H1 (cell line): ENCODE measurements at regions of chr4 and their contacts with region 1.

Region 1: DNA sequence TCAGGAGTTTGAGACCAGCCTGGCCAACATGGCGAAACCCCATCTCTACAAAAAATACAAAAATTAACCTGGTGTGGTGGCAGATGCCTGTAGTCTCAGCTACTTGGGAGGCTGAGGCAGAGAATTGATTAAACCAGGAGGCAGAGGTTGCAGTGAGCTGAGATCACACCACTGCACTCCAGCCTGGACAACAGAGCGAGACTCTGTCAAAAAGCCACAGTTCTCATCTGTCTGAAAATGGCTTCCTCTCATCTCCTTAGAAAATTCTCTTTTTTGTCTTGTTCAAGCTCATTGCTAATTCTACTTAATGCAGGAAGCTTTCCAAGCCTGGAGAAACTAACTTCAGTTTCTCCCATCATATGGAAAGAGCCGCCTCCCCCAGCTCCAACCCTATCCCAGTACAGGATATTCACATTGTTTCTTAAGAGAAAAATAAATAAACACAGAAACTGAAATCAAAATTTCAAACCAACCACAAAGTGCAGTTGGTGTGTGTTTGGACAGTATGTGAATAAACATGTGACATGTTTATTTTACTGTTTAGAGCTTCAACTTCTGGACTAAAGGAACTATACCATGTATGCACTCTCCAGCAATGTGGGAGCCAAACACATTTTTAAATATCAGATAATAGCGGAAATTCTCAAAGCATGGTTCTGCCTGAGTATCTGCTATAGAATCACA is 55.0 kb upstream of the GAB1 start:
- DNase-seq: no peak
- H3K4me3 ChIP-seq: no peak overlapping the region
- H3K27ac ChIP-seq: no peak overlapping the region
- H3K4me1 ChIP-seq: peaks cover 0 to 4% (median 3%) of the 10 kb centered on the region in 4 experiments; a peak in 3 of 7 replicates
- H3K27me3 ChIP-seq: no peaks in the 10 kb centered on the region
- CTCF ChIP-seq: no peak
- EP300 ChIP-seq: no peak
- POLR2A ChIP-seq: no peak
- RAD21 ChIP-seq: no peak

Region 2: DNA sequence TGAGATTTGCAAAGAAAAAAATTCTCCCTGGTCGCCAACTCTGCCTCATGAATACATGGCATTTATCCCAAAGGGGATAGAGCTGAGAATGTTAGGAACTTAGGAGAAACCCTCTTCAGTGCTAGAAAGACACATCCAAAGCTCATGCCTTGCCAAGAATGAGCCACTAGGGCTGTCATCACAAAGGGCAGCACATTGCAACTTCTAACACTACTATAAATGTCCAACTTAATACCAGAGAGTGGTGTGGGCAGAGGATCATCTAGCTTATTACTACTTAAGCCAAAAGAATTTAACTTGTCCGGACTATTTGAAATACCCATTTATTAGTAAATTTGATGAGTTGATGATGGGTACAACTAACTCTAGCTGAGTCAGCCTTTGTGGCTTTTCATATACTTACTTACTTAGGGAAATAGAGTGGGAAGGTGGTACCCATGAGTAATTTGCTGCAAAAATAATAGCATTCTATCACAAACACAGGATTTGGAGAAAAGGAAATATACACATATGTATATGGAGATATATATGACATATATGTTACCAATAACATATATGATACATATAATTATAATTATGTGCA is 11.3 kb before region 1 on chr4:
- CTCF ChIA-PET with region 1: interaction called, 11 read pairs
- POLR2A ChIA-PET with region 1: interaction called, 3 read pairs
- DNase-seq: no peak
- H3K4me3 ChIP-seq: no peak overlapping the region
- H3K27ac ChIP-seq: no peak overlapping the region
- H3K4me1 ChIP-seq: no peaks in the 10 kb centered on the region
- H3K27me3 ChIP-seq: no peaks in the 10 kb centered on the region
- CTCF ChIP-seq: no peak
- EP300 ChIP-seq: no peak
- POLR2A ChIP-seq: no peak
- RAD21 ChIP-seq: no peak

Region 3: GRCh38 chr4:143358923-143359643 is 77.4 kb after region 1 on chr4:
- CTCF ChIA-PET with region 1: no interaction called
- POLR2A ChIA-PET with region 1: no interaction called
- DNase-seq: no peak
- H3K4me3 ChIP-seq: no peak overlapping the region
- H3K27ac ChIP-seq: no peak overlapping the region
- H3K4me1 ChIP-seq: peaks cover 4 to 22% (median 16%) of the 10 kb centered on the region in 4 experiments; a peak in 6 of 7 replicates
- H3K27me3 ChIP-seq: no peaks in the 10 kb centered on the region
- CTCF ChIP-seq: no peak
- EP300 ChIP-seq: no peak
- POLR2A ChIP-seq: no peak
- RAD21 ChIP-seq: no peak